ENCODE measurements at regions of chr10 and their contacts with region 1.

Region 1: DNA sequence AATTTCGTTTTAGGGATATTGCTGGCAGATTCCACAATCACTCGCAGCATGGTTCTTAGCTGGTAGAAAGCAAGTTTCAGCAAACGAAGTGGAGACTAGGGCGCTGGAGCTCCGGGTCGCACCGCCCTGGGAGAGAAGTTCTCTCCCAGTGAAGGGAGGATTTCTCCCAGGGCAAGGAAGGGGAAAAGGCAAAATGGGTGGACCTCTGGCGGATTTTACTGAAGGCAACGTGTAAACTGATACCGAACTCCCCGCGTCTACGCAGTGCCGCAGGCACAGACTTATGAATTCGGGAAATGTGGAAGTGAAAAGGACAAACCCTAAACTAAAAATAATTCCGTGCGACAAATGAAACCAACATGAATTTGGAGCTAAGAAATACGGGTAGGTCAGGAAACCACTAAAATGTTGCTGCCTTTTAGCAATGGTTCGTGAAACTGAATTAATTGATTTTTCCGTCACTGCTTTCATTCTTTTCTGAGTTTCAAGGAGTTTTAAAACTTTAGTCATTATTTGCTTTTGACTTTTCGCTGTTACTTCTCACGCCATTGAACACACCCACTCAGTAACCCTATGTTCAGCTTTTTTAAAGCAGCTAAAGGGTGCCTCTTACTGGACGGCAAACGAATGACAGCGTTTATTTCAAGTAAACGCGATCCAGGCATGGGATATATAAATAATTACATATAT is at the start of gene MYOF:
- DNase-seq: peak; percentile 76
- H3K4me3 Mint-ChIP-seq: peak within 1 kb of the TSS; percentile 84
- H3K27ac Mint-ChIP-seq: peak within 1 kb of the TSS; percentile 81
- H3K4me1 Mint-ChIP-seq: peaks cover 20% of the 10 kb centered on the region
- H3K27me3 Mint-ChIP-seq: peaks cover 3% of the 10 kb centered on the region
- total RNA-seq, gene MYOF: 10.4 to 10.5 TPM

Region 2: GRCh38 chr10:92848441-92849233 is 633.7 kb before region 1 on chr10 and contains the start of gene EXOC6:
- CTCF ChIA-PET with region 1: no interaction called
- intact Hi-C with region 1: loop called (anchors 5 kb)
- DNase-seq: peak; percentile 86
- H3K4me3 Mint-ChIP-seq: peak within 1 kb of the TSS; percentile 88
- H3K27ac Mint-ChIP-seq: peak within 1 kb of the TSS; percentile 61
- H3K4me1 Mint-ChIP-seq: peaks cover 24% of the 10 kb centered on the region
- H3K27me3 Mint-ChIP-seq: no peaks in the 10 kb centered on the region
- total RNA-seq, gene EXOC6: 7.6 to 9.3 TPM

Region 3: DNA sequence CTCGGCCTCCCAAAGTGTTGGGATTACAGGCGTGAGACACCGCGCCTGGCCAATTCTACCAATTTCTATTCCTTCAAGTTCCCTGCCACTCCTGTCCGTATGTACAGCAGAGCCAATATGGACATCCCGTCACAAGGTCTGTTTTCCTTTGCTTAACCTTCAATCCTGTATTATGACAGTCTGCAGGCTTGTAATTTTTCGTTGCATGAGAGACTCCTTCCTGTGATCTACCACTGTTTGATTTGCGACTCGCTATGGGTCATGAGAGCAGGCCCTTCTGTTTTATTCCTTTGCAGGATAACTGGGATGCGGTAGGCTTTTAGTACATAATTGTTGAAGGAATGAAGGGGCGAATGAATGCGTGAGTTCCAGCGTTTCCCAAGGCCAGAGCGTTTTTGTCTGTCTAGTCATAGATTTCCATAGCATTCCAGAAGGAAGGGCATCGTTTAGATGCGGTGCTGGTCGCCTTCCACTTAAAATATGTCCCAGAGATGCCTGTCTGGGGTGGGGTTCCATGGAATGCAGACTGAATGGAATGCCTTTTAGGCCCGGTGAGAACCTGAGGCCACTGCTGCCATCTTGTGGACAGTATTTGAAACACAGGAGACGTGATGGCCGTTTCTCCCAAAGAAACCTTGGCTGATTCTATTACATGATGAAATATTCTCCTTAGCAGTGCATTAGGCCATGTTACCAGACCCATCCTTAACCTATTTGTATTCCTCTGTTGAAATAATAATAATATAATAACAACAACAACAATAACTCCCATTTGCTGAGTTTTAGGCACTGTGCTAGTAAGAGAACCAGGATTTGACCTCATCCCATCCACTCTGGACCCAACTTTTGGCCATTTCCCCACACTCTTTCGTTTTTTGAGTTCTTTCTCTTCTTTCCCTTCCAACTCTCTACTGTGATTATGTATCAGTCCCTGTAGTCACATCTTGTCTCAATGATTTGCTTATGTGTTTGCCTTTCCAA is 193.3 kb before region 1 on chr10:
- CTCF ChIA-PET with region 1: no interaction called
- intact Hi-C with region 1: loop called (anchors 1 kb)
- DNase-seq: peak; percentile 73
- H3K4me3 Mint-ChIP-seq: no peak overlapping the region
- H3K27ac Mint-ChIP-seq: peak overlapping the region; percentile 10
- H3K4me1 Mint-ChIP-seq: no peaks in the 10 kb centered on the region
- H3K27me3 Mint-ChIP-seq: no peaks in the 10 kb centered on the region

Region 4: GRCh38 chr10:93386631-93387369 is 95.5 kb before region 1 on chr10:
- CTCF ChIA-PET with region 1: interaction called, 23 read pairs
- intact Hi-C with region 1: no loop called
- DNase-seq: peak; percentile 41
- H3K4me3 Mint-ChIP-seq: no peak overlapping the region
- H3K27ac Mint-ChIP-seq: peak overlapping the region; percentile 50
- H3K4me1 Mint-ChIP-seq: peaks cover 26% of the 10 kb centered on the region
- H3K27me3 Mint-ChIP-seq: no peaks in the 10 kb centered on the region

Region 5: DNA sequence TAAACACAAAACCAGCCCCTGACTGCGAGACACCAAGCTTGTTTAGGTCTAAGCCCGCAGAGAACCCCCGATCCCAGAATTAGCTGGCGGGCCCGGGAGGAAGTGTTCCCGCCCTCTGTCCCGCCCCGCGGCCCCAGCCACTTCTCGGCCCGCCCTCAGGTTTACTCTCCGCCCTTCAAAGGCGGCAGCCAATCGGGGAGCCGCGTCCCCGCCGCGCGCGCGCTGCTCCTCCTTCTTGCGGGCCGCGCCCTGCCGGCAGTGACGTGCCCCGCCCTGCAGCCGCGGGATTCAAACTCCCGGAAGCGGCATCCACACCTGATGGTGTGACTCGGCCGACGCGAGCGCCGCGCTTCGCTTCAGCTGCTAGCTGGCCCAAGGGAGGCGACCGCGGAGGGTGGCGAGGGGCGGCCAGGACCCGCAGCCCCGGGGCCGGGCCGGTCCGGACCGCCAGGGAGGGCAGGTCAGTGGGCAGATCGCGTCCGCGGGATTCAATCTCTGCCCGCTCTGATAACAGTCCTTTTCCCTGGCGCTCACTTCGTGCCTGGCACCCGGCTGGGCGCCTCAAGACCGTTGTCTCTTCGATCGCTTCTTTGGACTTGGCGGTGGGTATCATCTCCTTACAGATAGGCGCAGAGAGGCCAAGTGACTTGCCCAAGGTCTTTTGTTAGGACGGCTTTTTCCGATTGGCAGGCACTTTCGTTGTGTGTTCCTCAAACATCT is 14.2 kb after region 1 on chr10 and contains the start of gene CEP55:
- CTCF ChIA-PET with region 1: interaction called, 24 read pairs
- intact Hi-C with region 1: loop called (anchors 1 kb)
- DNase-seq: peak; percentile 96
- H3K4me3 Mint-ChIP-seq: peak within 1 kb of the TSS; percentile 90
- H3K27ac Mint-ChIP-seq: peak within 1 kb of the TSS; percentile 63
- H3K4me1 Mint-ChIP-seq: peaks cover 18% of the 10 kb centered on the region
- H3K27me3 Mint-ChIP-seq: peaks cover 7% of the 10 kb centered on the region
- total RNA-seq, gene CEP55: 64.4 to 68.2 TPM

Region 6: DNA sequence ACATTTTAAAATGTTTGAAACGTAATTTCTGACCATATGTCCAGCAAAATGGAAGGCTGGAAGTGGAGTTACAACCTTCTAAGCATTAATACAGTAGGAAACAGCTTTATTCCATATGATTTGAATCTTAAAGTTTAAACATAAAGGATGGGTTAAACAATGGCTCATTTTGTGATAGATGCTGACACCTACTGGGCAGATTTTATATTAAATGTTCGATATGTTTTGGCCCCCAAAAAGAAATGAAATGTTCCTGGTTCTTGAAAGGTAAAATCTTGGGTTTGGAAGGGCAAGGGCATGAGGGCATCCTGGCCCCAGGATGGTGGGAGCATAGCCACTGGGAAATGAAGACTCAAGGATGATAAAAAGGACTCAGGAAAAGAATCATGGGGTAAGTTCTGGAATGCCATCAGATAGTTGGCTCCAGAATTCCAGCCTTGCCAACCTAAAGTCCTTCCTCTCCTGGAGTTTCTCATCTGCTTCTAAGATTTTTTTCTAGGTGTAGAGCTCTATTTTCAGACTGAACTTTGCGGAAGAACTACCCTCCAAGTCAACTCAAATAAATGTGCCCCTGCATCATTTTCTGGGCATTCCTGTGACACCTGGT is 376.9 kb after region 1 on chr10:
- CTCF ChIA-PET with region 1: no interaction called
- intact Hi-C with region 1: loop called (anchors 5 kb)
- DNase-seq: no peak
- H3K4me3 Mint-ChIP-seq: no peak overlapping the region
- H3K27ac Mint-ChIP-seq: no peak overlapping the region
- H3K4me1 Mint-ChIP-seq: no peaks in the 10 kb centered on the region
- H3K27me3 Mint-ChIP-seq: peaks cover 2% of the 10 kb centered on the region

Measured in activated naive CD4-positive, alpha-beta T cell treated with anti-CD3 and anti-CD28 coated beads for 36 hours (primary cell).